ENCODE measurements at regions of chr19 and their contacts with region 1.

Region 1: DNA sequence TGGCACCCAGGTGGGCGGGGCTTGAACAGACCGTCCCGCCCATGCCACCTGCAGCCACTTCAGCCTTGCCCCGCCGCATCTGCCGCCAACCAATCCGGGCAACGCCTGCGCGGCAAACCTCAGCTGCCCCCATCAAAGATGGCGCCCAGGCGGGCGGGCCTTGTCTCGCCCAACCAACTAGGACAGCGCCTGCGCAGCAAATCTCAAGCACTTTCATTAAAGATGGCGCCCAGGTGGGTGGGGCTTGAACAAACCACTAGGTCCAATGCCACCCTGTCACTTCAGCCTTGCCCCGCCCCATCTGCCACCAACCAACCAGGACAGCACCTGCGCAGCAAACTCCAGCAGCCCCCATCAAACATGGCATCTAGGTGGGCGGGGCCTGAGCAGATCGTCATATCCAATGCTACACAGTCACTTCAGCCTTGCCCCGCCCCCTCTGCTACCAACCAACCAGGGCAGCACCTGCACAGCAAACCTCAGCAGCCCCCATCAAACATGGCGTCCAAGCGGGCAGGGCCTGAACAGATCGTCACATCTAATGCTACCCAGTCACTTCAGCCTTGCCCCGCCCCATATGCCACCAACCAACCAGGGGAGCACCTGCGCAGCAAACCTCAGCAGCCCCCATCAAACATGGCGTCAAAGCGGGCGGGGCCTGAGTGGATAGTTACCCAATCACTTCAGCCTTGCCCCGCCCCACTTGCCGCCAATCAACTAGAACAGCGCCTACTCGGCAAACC is 1.4 kb downstream of the PEG3 start:
- DNase-seq: peak in 41 of 42 donors; percentile 90 to 100 (median 97)

Region 2: DNA sequence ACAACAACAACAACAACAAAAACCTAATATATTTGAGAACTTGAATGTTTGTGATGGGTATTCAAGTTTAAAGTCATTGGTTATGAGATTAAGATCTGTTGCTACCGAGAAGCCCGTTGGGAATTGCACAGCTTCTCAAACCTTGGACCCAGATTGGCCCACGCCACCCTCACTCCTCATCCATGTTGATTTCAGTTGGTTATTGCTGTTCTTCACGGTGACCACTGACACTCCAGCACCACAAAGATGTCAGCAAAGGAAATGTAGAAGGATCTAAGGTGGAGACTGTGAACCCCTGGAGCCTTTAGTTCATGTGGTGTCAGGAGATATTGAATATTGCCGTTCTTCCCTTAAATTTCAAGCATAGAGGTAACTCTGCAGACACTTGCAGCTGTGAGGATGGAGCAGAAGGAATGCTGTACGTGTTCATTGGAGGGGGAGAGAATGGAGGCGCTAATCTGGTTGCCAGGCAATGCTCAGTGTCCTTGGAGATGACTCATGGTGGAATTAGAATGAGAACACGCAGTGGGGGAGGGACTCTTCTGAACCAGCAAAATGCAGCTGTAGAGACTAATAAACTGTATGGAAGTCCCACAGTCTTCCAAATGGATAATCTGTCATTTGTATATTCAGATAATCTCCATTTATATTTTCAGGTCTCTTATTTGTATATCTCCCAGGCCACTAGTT is 146.7 kb before region 1 on chr19:
- intact Hi-C with region 1: loop called (anchors 10 kb)
- DNase-seq: peak in 41 of 42 donors; percentile 48 to 94 (median 76)

Region 3: GRCh38 chr19:56725829-56726424 is 113.2 kb before region 1 on chr19:
- intact Hi-C with region 1: loop called (anchors 10 kb)
- DNase-seq: peak in 28 of 42 donors; percentile 26 to 86 (median 56)

Region 4: GRCh38 chr19:56751078-56751489 is 88.0 kb before region 1 on chr19:
- intact Hi-C with region 1: no loop called
- DNase-seq: peak; percentile 72 to 95 (median 87)

Region 5: GRCh38 chr19:56765137-56765536 is 73.9 kb before region 1 on chr19:
- intact Hi-C with region 1: no loop called
- DNase-seq: peak; percentile 58 to 95 (median 88)